ENCODE measurements at regions of chr10 and their contacts with region 1.

Region 1: GRCh38 chr10:15168781-15169554 is 475 bp upstream of the NMT2 start:
- DNase-seq: peak; percentile 84 to 97 (median 91)
- ATAC-seq: peak; percentile 93
- H3K4me3 ChIP-seq: peak overlapping the region; percentile 57
- H3K4me3 Mint-ChIP-seq: peak overlapping the region; percentile 80 to 97 (median 89)
- H3K27ac ChIP-seq: peak overlapping the region; percentile 66
- H3K27ac Mint-ChIP-seq: peak overlapping the region; percentile 91 to 95 (median 95)
- H3K4me1 ChIP-seq: peaks cover 41 to 44% of the 10 kb centered on the region in 2 donors
- H3K4me1 Mint-ChIP-seq: peaks cover 47 to 72% (median 63%) of the 10 kb centered on the region in 7 donors
- H3K27me3 ChIP-seq: no peaks in the 10 kb centered on the region
- H3K27me3 Mint-ChIP-seq: no peaks in the 10 kb centered on the region

Region 2: DNA sequence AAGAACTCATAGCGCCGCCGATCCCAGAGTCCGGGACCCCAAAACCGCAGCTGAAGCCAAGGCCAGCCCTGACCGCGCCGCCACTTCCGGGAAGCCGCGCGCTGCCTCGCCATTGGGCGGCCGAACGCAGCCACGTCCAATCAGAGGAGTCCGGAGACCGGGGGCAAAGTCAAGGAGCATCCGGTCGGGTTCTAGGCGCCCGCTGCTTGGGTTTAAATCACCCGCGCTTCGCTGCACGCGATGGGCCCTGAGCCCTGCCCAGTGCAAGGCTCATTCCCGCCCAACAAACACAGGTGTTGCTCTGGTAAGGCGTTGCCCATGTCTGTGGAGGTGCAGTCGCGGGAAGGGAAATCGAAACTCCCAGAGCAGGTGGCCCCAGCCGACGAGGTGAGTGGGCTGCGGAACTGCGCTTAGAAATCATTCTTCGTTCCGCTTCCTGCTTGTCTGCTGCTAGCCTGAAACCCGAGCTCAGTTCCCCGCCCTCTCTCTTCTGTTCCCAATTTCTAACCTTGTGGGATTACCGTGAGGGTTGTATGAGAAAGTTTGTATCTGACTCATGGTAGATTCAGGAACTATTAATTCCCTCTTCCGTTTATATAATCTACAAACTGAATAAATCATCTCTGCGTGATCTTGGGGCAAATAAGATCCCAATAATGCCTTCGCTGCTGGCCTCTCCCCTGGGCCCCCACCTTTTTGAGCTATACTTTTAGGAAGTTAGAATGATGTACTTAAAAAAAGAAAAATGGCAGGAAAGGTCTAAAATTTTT is 214.8 kb before region 1 on chr10 and contains the start of gene DCLRE1C:
- CTCF ChIA-PET with region 1: no interaction called
- POLR2A ChIA-PET with region 1: interaction called, 3 read pairs
- intact Hi-C with region 1: loop called (anchors 1 kb)
- DNase-seq: peak; percentile 70 to 89 (median 87)
- ATAC-seq: peak; percentile 90
- H3K4me3 ChIP-seq: peak within 1 kb of the TSS; percentile 97
- H3K4me3 Mint-ChIP-seq: peak within 1 kb of the TSS; percentile 89 to 96 (median 92)
- H3K27ac ChIP-seq: peak within 1 kb of the TSS; percentile 78
- H3K27ac Mint-ChIP-seq: peak within 1 kb of the TSS; percentile 91 to 97 (median 96)
- H3K4me1 ChIP-seq: peaks cover 29 to 32% of the 10 kb centered on the region in 2 donors
- H3K4me1 Mint-ChIP-seq: peaks cover 29 to 69% (median 65%) of the 10 kb centered on the region in 7 donors
- H3K27me3 ChIP-seq: no peaks in the 10 kb centered on the region
- H3K27me3 Mint-ChIP-seq: no peaks in the 10 kb centered on the region
- total RNA-seq, gene DCLRE1C: 16.4 to 38.7 (median 24.2) TPM

Region 3: DNA sequence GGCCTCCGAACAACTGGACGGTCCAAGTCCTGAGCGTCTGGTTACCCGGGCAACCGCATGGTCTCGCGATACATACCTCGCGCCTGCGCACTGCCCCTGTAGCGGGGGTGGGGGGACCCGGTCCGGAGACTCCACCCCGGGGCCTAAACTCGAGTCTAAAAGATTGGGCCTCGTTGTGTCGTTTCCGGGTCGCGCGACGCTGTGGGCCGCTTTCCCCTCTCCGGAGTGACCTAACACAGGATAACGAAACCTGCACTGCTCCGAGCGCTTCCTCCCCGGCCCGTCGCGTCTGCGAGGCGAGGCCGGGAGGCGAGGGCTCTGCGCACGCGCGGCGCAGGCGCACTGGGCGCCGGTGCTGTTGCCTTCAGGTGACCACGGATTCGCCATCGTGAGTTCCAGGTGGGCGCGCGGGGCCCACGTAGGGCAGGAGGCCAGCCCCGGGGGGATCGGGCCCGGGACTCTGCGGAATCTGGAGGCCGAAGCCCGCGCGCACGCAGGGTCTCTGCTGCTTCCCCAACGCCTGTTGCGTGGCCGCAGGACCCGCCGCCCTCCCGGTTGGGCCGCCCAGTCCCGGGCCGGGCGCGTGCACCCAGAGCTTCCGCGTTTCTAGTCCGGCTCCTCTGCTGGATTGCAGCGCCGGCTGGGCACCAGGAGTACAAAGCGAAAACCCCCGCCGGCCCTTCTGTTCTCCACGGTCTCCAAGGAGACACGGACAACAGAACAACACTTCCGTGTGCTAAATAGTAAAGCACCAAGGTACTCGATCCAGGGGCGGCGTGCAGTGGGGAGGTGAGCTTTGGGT is 71.8 kb before region 1 on chr10 and contains the start of gene RPP38:
- CTCF ChIA-PET with region 1: no interaction called
- POLR2A ChIA-PET with region 1: interaction called, 8 read pairs
- intact Hi-C with region 1: loop called (anchors 1 kb)
- DNase-seq: peak; percentile 88 to 98 (median 95)
- ATAC-seq: peak; percentile 85
- H3K4me3 ChIP-seq: peak within 1 kb of the TSS; percentile 80
- H3K4me3 Mint-ChIP-seq: peak within 1 kb of the TSS; percentile 91 to 100 (median 98)
- H3K27ac ChIP-seq: peak within 1 kb of the TSS; percentile 94
- H3K27ac Mint-ChIP-seq: peak within 1 kb of the TSS; percentile 94 to 100 (median 98)
- H3K4me1 ChIP-seq: peaks cover 16 to 22% of the 10 kb centered on the region in 2 donors
- H3K4me1 Mint-ChIP-seq: peaks cover 22 to 50% (median 40%) of the 10 kb centered on the region in 7 donors
- H3K27me3 ChIP-seq: no peaks in the 10 kb centered on the region
- H3K27me3 Mint-ChIP-seq: peaks cover 0 to 3% (median 0%) of the 10 kb centered on the region in 5 donors
- total RNA-seq, gene RPP38: 7.6 to 22.4 (median 16.0) TPM

Region 4: DNA sequence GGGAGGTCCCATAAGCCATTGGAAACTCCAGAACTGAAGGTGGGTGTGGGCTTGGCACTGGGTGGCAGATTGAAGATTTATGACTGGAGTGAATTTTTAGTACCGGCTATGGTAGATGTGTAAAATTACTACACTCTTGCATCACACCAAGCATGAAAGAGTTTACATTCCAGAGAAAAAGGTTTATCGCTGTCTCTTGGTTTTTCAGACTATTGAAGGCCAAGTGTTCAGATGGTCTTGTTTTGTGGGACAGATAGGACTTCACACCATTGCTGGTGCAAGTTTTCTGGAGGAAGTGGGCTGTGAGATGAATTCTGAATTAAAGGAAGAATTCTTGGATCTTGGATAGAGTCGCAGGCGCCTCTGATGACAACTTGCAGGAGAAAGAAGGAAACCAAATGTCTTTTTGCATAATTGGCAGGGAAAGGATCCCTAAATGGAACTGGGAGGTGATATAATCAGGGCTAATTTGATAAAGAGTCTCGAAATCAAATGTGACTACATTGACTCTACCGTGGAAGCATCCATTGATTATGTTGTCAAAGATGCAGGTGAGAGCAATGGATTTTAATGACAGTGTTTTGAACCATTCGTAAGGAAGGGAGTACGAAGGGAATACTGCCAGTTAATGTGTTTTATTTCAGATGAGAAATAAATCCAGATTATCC is 13.7 kb after region 1 on chr10:
- CTCF ChIA-PET with region 1: interaction called, 7 read pairs
- POLR2A ChIA-PET with region 1: interaction called, 217 read pairs
- intact Hi-C with region 1: loop called in 1 of 2 experiments (anchors 1 kb)
- DNase-seq: no peak
- ATAC-seq: no peak
- H3K4me3 ChIP-seq: no peak overlapping the region
- H3K4me3 Mint-ChIP-seq: no peak overlapping the region
- H3K27ac ChIP-seq: no peak overlapping the region
- H3K27ac Mint-ChIP-seq: peak overlapping the region in 5 of 9 donors; percentile 53 to 76 (median 62)
- H3K4me1 ChIP-seq: peaks cover 10 to 24% of the 10 kb centered on the region in 2 donors
- H3K4me1 Mint-ChIP-seq: peaks cover 20 to 53% (median 44%) of the 10 kb centered on the region in 7 donors
- H3K27me3 ChIP-seq: no peaks in the 10 kb centered on the region
- H3K27me3 Mint-ChIP-seq: peaks cover 0 to 4% (median 0%) of the 10 kb centered on the region in 5 donors

Region 5: GRCh38 chr10:15209827-15210509 is 41.0 kb after region 1 on chr10:
- CTCF ChIA-PET with region 1: interaction called, 15 read pairs
- POLR2A ChIA-PET with region 1: interaction called, 55 read pairs
- intact Hi-C with region 1: loop called (anchors 1 kb)
- DNase-seq: peak; percentile 49 to 75 (median 71)
- ATAC-seq: peak; percentile 77
- H3K4me3 ChIP-seq: peak overlapping the region; percentile 4
- H3K4me3 Mint-ChIP-seq: peak overlapping the region; percentile 16 to 82 (median 62)
- H3K27ac ChIP-seq: peak overlapping the region; percentile 18
- H3K27ac Mint-ChIP-seq: peak overlapping the region; percentile 13 to 99 (median 85)
- H3K4me1 ChIP-seq: peaks cover 23 to 47% of the 10 kb centered on the region in 2 donors
- H3K4me1 Mint-ChIP-seq: peaks cover 30 to 67% (median 63%) of the 10 kb centered on the region in 7 donors
- H3K27me3 ChIP-seq: no peaks in the 10 kb centered on the region
- H3K27me3 Mint-ChIP-seq: no peaks in the 10 kb centered on the region

Region 6: DNA sequence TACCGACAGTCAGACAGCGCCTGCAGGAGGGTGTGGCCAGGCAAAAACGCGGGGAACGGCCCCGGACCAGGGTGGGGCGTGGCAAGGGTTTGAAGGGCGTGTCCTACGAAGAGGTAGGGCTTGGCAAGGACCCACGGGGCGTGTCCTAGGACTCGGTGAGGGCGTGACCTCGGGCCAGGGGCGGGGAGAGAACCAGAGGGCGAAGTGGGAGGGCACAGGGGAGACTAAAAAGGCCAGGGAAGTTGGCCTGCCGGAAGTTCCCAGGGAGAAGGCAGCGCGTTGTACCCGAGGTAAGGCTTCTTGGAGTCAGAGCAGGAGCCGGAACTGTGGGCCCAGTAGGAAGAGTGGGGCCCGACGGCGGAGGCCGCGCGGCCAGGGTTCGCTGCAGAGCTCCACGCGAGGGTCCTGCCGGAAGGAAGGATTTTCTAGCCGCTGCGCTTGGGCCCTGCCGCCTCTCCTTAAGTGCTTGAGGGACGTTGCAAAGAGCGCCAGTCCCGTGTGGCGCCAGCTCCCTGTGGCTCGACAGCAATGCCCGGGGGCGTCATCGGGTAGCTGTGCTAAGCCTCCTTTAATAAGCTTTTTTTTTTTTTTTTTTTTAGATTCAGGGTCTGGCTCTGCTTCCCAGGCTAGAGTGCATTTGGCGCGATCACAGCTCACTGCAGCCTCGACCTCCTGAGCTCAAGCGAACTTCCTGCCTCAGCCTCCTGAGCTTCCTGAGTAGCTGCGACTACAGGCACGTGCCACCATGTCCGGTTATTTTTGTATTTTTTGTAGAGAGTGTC is 1268.0 kb after region 1 on chr10 and contains the start of gene PTER:
- CTCF ChIA-PET with region 1: no interaction called
- POLR2A ChIA-PET with region 1: no interaction called
- intact Hi-C with region 1: loop called in 1 of 2 experiments (anchors 2 kb)
- DNase-seq: peak; percentile 92 to 99 (median 94)
- ATAC-seq: peak; percentile 100
- H3K4me3 ChIP-seq: peak within 1 kb of the TSS; percentile 93
- H3K4me3 Mint-ChIP-seq: peak within 1 kb of the TSS; percentile 91 to 99 (median 96)
- H3K27ac ChIP-seq: peak within 1 kb of the TSS; percentile 77
- H3K27ac Mint-ChIP-seq: peak within 1 kb of the TSS; percentile 87 to 97 (median 94)
- H3K4me1 ChIP-seq: peaks cover 13 to 28% of the 10 kb centered on the region in 2 donors
- H3K4me1 Mint-ChIP-seq: peaks cover 36 to 57% (median 48%) of the 10 kb centered on the region in 7 donors
- H3K27me3 ChIP-seq: no peaks in the 10 kb centered on the region
- H3K27me3 Mint-ChIP-seq: peaks cover 0 to 19% (median 0%) of the 10 kb centered on the region in 5 donors
- total RNA-seq, gene PTER: 12.9 to 23.7 (median 15.3) TPM

Measured in naive thymus-derived CD4-positive, alpha-beta T cell (primary cell).